ENCODE measurements at regions of chr4 and their contacts with region 1.

Region 1: DNA sequence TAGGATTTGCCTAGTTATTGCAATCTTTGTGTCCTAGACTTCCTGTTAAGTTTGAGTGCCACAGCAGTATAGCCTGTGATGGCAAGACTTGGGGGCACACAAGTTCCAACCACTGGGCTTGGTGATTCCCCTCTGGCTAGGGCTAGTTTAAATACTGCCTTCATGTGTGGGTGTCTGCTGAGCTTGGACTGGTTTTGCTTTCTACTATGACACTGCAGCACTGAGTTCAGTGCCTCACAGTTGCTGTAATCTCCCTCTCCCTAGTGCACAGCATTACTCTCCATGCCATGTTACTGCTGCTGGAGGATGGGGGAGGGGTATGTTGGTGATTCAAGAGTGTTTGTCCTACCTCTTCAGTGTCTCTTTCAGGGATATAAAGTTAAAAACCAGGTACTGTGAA is 379.6 kb downstream of the IL15 start:
- DNase-seq: no peak
- H3K4me3 ChIP-seq: no peak overlapping the region
- H3K27me3 ChIP-seq: no peaks in the 10 kb centered on the region
- CTCF ChIP-seq: no peak

Region 2: DNA sequence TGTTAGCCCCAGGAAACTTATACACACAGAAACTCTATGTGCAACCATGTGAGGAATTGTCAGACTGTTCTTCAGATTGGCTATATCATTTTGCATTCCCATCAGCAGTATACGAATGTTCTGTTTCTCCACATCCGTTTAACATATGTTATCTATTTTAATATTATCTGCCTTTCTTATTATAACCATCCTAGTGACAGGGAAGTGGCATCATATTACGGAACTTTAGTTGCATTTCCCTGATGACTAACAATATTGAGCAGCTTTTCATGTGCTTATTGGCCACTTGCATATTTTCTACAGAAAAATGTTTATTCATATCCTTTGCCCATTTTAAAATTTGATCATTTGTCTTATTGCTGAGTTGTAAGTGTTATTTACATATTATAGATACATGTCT is 416.2 kb before region 1 on chr4:
- CTCF ChIA-PET with region 1: no interaction called
- POLR2A ChIA-PET with region 1: no interaction called
- DNase-seq: peak; percentile 4
- H3K4me3 ChIP-seq: no peak overlapping the region
- H3K27me3 ChIP-seq: no peaks in the 10 kb centered on the region
- CTCF ChIP-seq: no peak

Region 3: DNA sequence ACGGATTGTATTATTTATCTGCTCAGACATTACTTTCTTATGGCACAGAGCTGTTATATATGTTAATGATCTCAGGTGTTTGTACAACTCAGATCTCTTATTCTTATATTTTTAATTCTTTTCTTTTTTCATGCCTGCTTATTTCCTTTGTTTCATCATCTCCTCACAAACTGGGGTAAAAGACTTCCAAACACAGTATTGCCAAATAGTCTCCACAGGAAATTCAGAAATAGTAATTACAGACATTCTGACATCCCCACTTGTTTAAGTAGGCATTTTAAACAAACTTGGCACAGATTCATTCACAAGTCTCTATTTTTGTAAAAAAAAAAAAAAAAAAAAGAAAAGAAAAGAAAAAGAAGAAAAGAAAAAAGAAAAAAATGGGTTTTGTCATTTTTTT is 1038.9 kb after region 1 on chr4:
- CTCF ChIA-PET with region 1: no interaction called
- POLR2A ChIA-PET with region 1: interaction called, 11 read pairs
- DNase-seq: no peak
- H3K4me3 ChIP-seq: no peak overlapping the region
- H3K27me3 ChIP-seq: no peaks in the 10 kb centered on the region
- CTCF ChIP-seq: no peak

Measured in BJ (cell line).